ENCODE measurements at regions of chr3 and their contacts with region 1.

Region 1: GRCh38 chr3:72722930-72723726 is 125.1 kb downstream of the SHQ1 start:
- DNase-seq: no peak
- H3K4me3 Mint-ChIP-seq: no peak overlapping the region
- H3K27ac Mint-ChIP-seq: no peak overlapping the region
- H3K4me1 Mint-ChIP-seq: peaks cover 19% of the 10 kb centered on the region
- H3K27me3 Mint-ChIP-seq: no peaks in the 10 kb centered on the region

Region 2: GRCh38 chr3:71875461-71875947 is 847.6 kb before region 1 on chr3:
- intact Hi-C with region 1: loop called (anchors 1 kb)
- DNase-seq: peak; percentile 67
- H3K4me3 Mint-ChIP-seq: no peak overlapping the region
- H3K27ac Mint-ChIP-seq: peak overlapping the region; percentile 59
- H3K4me1 Mint-ChIP-seq: peaks cover 38% of the 10 kb centered on the region
- H3K27me3 Mint-ChIP-seq: peaks cover 8% of the 10 kb centered on the region

Region 3: DNA sequence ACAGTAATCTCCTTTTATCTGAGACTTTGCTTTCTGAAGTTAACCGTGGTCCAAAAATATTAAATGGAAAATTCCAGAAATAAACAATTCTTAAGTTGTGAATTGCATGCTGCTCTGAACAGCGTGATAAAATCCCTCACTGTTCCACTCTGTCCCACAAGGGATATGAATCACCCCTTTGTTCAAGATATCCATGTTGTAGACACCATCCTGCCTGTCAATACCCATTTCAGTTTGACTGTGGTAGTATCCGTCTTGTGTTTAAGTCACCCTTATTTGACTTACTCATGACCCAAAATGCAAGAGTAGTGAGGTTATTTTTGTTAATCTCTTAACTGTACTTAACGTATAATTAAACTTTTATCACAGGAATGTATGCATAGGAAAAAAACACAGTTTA is 309.9 kb before region 1 on chr3:
- intact Hi-C with region 1: no loop called
- DNase-seq: no peak
- H3K4me3 Mint-ChIP-seq: no peak overlapping the region
- H3K27ac Mint-ChIP-seq: peak overlapping the region; percentile 52
- H3K4me1 Mint-ChIP-seq: peaks cover 76% of the 10 kb centered on the region
- H3K27me3 Mint-ChIP-seq: no peaks in the 10 kb centered on the region

Region 4: GRCh38 chr3:72473156-72473555 is 250.0 kb before region 1 on chr3:
- intact Hi-C with region 1: loop called (anchors 2 kb)
- DNase-seq: no peak
- H3K4me3 Mint-ChIP-seq: no peak overlapping the region
- H3K27ac Mint-ChIP-seq: peak overlapping the region; percentile 57
- H3K4me1 Mint-ChIP-seq: peaks cover 31% of the 10 kb centered on the region
- H3K27me3 Mint-ChIP-seq: no peaks in the 10 kb centered on the region

Region 5: GRCh38 chr3:72482589-72483321 is 240.4 kb before region 1 on chr3:
- intact Hi-C with region 1: loop called (anchors 1 kb)
- DNase-seq: peak; percentile 47
- H3K4me3 Mint-ChIP-seq: peak overlapping the region; percentile 68
- H3K27ac Mint-ChIP-seq: peak overlapping the region; percentile 94
- H3K4me1 Mint-ChIP-seq: peaks cover 73% of the 10 kb centered on the region
- H3K27me3 Mint-ChIP-seq: no peaks in the 10 kb centered on the region

Region 6: GRCh38 chr3:72702390-72702789 is 20.7 kb before region 1 on chr3:
- intact Hi-C with region 1: no loop called
- DNase-seq: no peak
- H3K4me3 Mint-ChIP-seq: no peak overlapping the region
- H3K27ac Mint-ChIP-seq: no peak overlapping the region
- H3K4me1 Mint-ChIP-seq: no peaks in the 10 kb centered on the region
- H3K27me3 Mint-ChIP-seq: no peaks in the 10 kb centered on the region

Region 7: GRCh38 chr3:72756900-72757299 is 33.8 kb after region 1 on chr3:
- intact Hi-C with region 1: loop called (anchors 1 kb)
- DNase-seq: peak; percentile 38
- H3K4me3 Mint-ChIP-seq: peak overlapping the region; percentile 34
- H3K27ac Mint-ChIP-seq: peak overlapping the region; percentile 64
- H3K4me1 Mint-ChIP-seq: peaks cover 50% of the 10 kb centered on the region
- H3K27me3 Mint-ChIP-seq: no peaks in the 10 kb centered on the region